GM12878 (cell line): ENCODE measurements at regions of chrX and their contacts with region 1.

Region 1: GRCh38 chrX:129925305-129926092 is 19.5 kb downstream of the UTP14A start:
- DNase-seq: no peak
- ATAC-seq: peak; percentile 93
- H3K4me3 ChIP-seq: no peak overlapping the region
- H3K27ac ChIP-seq: no peak overlapping the region
- H3K4me1 ChIP-seq: no peaks in the 10 kb centered on the region
- H3K27me3 ChIP-seq: no peaks in the 10 kb centered on the region
- CTCF ChIP-seq: peak; percentile 57 to 73 (median 73); a peak in 5 of 6 replicates
- EP300 ChIP-seq: no peak
- POLR2A ChIP-seq: no peak
- RAD21 ChIP-seq: peak; percentile 70

Region 2: GRCh38 chrX:129961180-129962083 is 35.9 kb after region 1 on chrX:
- CTCF ChIA-PET with region 1: interaction called, 13 read pairs
- POLR2A ChIA-PET with region 1: interaction called, 3 read pairs
- RAD21 ChIA-PET with region 1: interaction called, 7 read pairs
- SMC1A ChIA-PET with region 1: interaction called, 3 read pairs
- in situ Hi-C with region 1: no loop called
- intact Hi-C with region 1: no loop called
- DNase-seq: peak; percentile 17
- ATAC-seq: peak; percentile 92
- H3K4me3 ChIP-seq: peak overlapping the region; percentile 37; the same call in 1 of the 2 replicates
- H3K27ac ChIP-seq: no peak overlapping the region
- H3K4me1 ChIP-seq: peaks cover 7% of the 10 kb centered on the region
- H3K27me3 ChIP-seq: no peaks in the 10 kb centered on the region
- CTCF ChIP-seq: no peak
- EP300 ChIP-seq: no peak
- POLR2A ChIP-seq: peak; percentile 78
- RAD21 ChIP-seq: no peak

Region 3: GRCh38 chrX:130039847-130040246 is 114.3 kb after region 1 on chrX:
- CTCF ChIA-PET with region 1: interaction called, 9 read pairs
- POLR2A ChIA-PET with region 1: no interaction called
- RAD21 ChIA-PET with region 1: interaction called, 4 read pairs
- SMC1A ChIA-PET with region 1: no interaction called
- in situ Hi-C with region 1: no loop called
- intact Hi-C with region 1: loop called (anchors 5 kb)
- DNase-seq: no peak
- ATAC-seq: no peak
- H3K4me3 ChIP-seq: no peak overlapping the region
- H3K27ac ChIP-seq: no peak overlapping the region
- H3K4me1 ChIP-seq: no peaks in the 10 kb centered on the region
- H3K27me3 ChIP-seq: no peaks in the 10 kb centered on the region
- CTCF ChIP-seq: no peak
- EP300 ChIP-seq: no peak
- POLR2A ChIP-seq: no peak
- RAD21 ChIP-seq: no peak

Region 4: GRCh38 chrX:130066975-130067615 is 141.6 kb after region 1 on chrX:
- CTCF ChIA-PET with region 1: interaction called, 42 read pairs
- POLR2A ChIA-PET with region 1: no interaction called
- RAD21 ChIA-PET with region 1: no interaction called
- SMC1A ChIA-PET with region 1: interaction called, 23 read pairs
- in situ Hi-C with region 1: loop called (anchors 5 kb)
- intact Hi-C with region 1: no loop called
- DNase-seq: no peak
- ATAC-seq: no peak
- H3K4me3 ChIP-seq: no peak overlapping the region
- H3K27ac ChIP-seq: no peak overlapping the region
- H3K4me1 ChIP-seq: no peaks in the 10 kb centered on the region
- H3K27me3 ChIP-seq: no peaks in the 10 kb centered on the region
- CTCF ChIP-seq: no peak
- EP300 ChIP-seq: no peak
- POLR2A ChIP-seq: no peak
- RAD21 ChIP-seq: no peak